Heart left ventricle (tissue), 16 donors: ENCODE measurements at regions of chr5 and their contacts with region 1.

Region 1: GRCh38 chr5:128844354-128844923 is 120.8 kb upstream of the SLC27A6 start:
- DNase-seq: no peak
- ATAC-seq: no peak
- H3K4me3 ChIP-seq: no peak overlapping the region
- H3K27ac ChIP-seq: no peak overlapping the region
- H3K4me1 ChIP-seq: no peaks in the 10 kb centered on the region
- H3K27me3 ChIP-seq: no peaks in the 10 kb centered on the region
- CTCF ChIP-seq: peak; percentile 17 to 59 (median 40)
- POLR2A ChIP-seq: no peak

Region 2: DNA sequence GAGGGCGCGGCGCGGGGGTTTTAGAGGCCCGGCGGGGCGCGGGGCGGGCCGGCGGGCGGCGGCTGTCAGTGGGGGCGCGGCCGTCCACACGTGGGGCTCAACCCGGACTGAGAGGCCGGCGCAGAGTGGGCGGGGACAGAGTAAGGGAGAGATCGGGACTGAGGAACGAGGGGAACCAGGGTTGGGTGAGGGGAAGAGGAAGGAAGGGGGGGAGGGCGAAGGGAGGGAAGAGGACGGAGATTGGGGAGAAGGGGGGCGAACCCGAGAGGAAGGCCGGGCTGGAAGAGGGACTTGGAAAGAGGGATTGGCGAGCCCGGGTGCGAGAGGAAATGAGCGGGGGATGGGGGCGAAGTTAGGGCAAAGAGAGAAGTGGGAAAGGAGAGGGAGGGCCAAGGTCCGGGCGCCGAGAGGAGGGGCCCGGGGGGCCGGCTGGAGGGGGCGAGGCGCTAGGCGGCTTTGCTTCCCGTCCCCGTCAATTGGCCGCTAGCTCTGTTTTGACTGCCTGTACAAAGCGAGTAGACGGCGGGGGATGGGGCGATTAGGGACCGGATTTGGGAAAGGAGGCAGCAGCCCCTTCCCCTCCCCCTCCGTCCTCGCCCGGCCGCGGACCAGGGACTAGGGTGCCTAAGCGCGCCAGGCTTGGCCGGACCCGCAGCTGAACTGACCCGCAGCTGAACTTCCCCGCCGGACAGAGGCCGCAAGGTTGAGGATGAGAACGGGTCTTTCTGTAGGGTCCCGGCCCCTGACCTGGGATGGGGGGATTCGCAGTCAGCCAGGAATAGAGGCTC is 306.0 kb before region 1 on chr5:
- intact Hi-C with region 1: loop called in 2 of 10 experiments (anchors 5 to 10 kb)
- DNase-seq: peak; percentile 75 to 87 (median 83)
- ATAC-seq: peak; percentile 77 to 90 (median 88)
- H3K4me3 ChIP-seq: peak overlapping the region; percentile 32 to 68 (median 60)
- H3K27ac ChIP-seq: peak overlapping the region in 10 of 12 donors; percentile 26 to 86 (median 66)
- H3K4me1 ChIP-seq: peaks cover 0 to 27% (median 5%) of the 10 kb centered on the region in 12 donors
- H3K27me3 ChIP-seq: peaks cover 0 to 47% (median 26%) of the 10 kb centered on the region in 9 donors
- CTCF ChIP-seq: no peak
- POLR2A ChIP-seq: no peak

Region 3: DNA sequence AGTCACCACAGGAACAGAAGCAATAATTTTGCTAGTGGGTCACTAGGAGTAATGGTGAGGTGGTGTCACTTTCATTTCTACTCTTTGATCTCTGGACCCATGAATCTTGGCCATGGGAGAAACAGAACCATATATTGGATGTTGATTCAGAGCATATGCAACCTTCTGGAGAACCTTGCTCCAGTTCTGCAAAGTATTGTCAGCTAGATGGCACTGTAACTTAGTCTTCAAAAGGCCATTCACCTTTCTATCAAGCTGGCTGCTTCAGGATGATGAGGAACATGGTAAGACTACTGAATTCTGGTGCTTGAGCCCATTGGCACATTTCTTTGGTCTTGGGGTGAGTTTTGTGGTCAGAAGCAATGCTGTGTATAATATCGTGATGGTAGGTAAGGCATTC is 177.3 kb before region 1 on chr5:
- intact Hi-C with region 1: loop called in 9 of 10 experiments (anchors 5 to 10 kb)
- DNase-seq: no peak
- ATAC-seq: no peak
- H3K4me3 ChIP-seq: no peak overlapping the region
- H3K27ac ChIP-seq: no peak overlapping the region
- H3K4me1 ChIP-seq: no peaks in the 10 kb centered on the region
- H3K27me3 ChIP-seq: no peaks in the 10 kb centered on the region
- CTCF ChIP-seq: peak in 8 of 12 donors; percentile 11 to 44 (median 35)
- POLR2A ChIP-seq: no peak

Region 4: DNA sequence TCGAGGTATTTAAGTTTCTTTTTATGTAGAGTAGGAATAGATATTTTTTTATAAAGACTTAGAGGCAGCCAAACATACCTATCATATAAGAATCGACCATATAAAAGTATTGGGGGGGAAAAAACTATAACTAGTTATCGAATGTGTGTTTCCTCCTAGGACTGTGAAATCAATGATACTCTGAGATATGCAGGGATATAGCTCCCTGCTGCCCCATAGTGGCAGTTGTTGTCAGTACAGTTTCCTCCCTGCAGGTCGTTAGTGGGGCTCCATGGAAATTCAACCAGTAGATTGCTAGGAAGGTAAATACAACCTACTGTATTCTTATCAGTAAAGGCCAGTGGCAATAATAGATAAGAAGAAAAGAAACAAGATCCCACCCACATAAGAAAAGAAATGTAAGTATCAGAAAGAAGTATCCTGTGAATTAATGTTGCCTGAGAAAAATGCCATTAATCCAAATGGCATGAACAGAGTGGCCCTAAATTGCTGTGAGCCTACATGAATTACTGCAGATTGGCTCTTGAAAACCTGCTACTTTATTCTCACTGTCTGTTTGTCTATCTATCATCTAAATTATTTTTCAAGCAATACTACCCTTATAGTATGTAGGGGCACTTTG is 169.5 kb before region 1 on chr5:
- intact Hi-C with region 1: loop called in 2 of 10 experiments (anchors 5 kb)
- DNase-seq: peak in 1 of 5 donors; percentile 28
- ATAC-seq: no peak
- H3K4me3 ChIP-seq: no peak overlapping the region
- H3K27ac ChIP-seq: no peak overlapping the region
- H3K4me1 ChIP-seq: no peaks in the 10 kb centered on the region
- H3K27me3 ChIP-seq: no peaks in the 10 kb centered on the region
- CTCF ChIP-seq: peak; percentile 14 to 61 (median 48)
- POLR2A ChIP-seq: no peak

Region 5: GRCh38 chr5:129652349-129653069 is 808.1 kb after region 1 on chr5:
- intact Hi-C with region 1: no loop called
- DNase-seq: no peak
- ATAC-seq: no peak
- H3K4me3 ChIP-seq: no peak overlapping the region
- H3K27ac ChIP-seq: no peak overlapping the region
- H3K4me1 ChIP-seq: no peaks in the 10 kb centered on the region
- H3K27me3 ChIP-seq: no peaks in the 10 kb centered on the region
- CTCF ChIP-seq: no peak
- POLR2A ChIP-seq: no peak